Endothelial cell of umbilical vein (primary cell): ENCODE measurements at regions of chr13 and their contacts with region 1.

Region 1: GRCh38 chr13:61410669-61411297 is 4.9 kb downstream of the PCDH20 start:
- DNase-seq: peak; percentile 24
- H3K4me3 ChIP-seq: no peak overlapping the region
- H3K27ac ChIP-seq: no peak overlapping the region
- H3K4me1 ChIP-seq: no peaks in the 10 kb centered on the region
- H3K27me3 ChIP-seq: peaks cover 27 to 37% of the 10 kb centered on the region in 2 experiments
- CTCF ChIP-seq: peak; percentile 11 to 38
- POLR2A ChIP-seq: no peak

Region 2: DNA sequence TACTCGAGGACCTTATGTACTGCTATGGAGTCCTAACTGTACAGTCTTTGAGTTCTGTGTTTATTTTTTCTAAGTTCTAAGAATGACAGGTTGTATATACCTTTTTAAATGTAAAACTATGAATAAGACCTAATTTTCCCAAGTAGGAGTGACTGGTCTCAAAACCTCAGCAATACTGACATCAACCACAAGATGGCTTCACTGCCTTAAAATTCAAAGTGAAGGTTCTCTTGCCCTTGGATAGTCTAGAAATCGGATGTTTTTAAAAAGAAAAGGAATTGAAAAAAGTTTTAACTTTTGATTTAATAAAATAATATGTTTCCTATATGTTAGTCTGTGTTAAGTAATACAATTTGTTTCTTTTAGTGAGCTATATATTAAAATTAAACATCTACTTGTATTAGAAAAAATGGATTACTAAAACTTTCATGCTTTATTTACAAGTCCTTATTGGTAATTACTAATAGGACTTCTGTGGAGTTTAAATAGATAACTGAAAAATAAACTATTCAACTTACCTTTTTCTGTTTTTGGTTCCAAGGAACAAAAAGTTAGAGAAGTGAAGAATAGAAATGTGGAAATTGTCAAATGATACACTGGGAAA is 961.8 kb before region 1 on chr13:
- CTCF ChIA-PET with region 1: interaction called, 7 read pairs
- POLR2A ChIA-PET with region 1: no interaction called
- dilution Hi-C with region 1: no loop called
- intact Hi-C with region 1: loop called (anchors 10 kb)
- DNase-seq: peak; percentile 75
- H3K4me3 ChIP-seq: no peak overlapping the region
- H3K27ac ChIP-seq: no peak overlapping the region
- H3K4me1 ChIP-seq: no peaks in the 10 kb centered on the region
- H3K27me3 ChIP-seq: no peaks in the 10 kb centered on the region
- CTCF ChIP-seq: peak; percentile 48 to 56
- POLR2A ChIP-seq: no peak

Region 3: DNA sequence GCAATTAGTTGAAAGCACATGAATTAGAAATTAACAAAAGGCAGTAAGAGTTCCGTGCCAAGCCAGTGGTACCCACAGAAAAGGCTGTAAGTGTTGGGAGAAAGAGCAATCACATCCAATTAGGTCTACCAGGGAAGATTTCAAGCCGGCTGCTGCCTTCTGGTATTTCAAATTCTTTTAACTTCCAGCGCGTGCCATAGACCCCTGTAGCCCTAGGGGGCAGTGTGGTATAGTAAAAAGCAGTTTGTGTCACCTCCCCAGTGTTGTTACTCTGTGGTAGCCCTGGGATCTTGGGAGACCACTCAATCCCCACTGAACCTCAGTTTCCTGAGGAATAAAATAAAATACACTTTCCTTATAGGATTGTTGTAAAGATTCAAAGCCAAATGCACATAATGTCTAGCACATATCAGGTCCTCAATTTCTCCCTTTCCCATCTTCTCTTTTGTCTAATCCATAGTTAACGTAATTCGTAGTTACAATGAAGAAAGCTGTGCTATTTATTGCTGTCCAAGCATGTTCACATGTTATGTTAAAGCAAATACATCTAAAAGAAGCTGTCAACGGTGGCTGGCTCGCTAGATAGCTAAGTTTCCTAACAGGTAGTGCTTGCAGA is 783.6 kb before region 1 on chr13:
- CTCF ChIA-PET with region 1: interaction called, 37 read pairs
- POLR2A ChIA-PET with region 1: no interaction called
- dilution Hi-C with region 1: no loop called
- intact Hi-C with region 1: loop called (anchors 1 kb)
- DNase-seq: peak; percentile 42
- H3K4me3 ChIP-seq: no peak overlapping the region
- H3K27ac ChIP-seq: no peak overlapping the region
- H3K4me1 ChIP-seq: no peaks in the 10 kb centered on the region
- H3K27me3 ChIP-seq: peaks cover 2 to 22% of the 10 kb centered on the region in 2 experiments
- CTCF ChIP-seq: peak; percentile 63 to 72
- POLR2A ChIP-seq: no peak

Region 4: DNA sequence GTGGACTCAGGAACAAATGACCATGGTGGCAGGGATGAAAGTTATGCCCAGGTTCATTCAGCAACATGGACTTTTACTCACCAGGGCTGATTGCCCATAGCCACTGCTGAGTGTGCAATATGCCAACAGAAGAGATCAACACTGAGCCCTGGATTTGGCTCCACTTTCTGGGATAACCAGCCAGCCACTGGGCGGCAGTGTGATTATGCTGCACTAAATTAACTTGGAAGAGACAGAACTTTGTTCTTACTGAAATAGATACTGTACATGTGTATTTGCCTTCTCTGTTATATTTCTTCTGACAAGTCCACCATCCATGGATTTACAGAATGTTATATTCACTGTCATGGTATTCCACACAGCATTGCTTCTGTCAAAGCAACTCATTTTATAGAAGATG is 756.4 kb before region 1 on chr13:
- CTCF ChIA-PET with region 1: interaction called, 3 read pairs
- POLR2A ChIA-PET with region 1: no interaction called
- dilution Hi-C with region 1: no loop called
- intact Hi-C with region 1: loop called (anchors 1 kb)
- DNase-seq: peak; percentile 56
- H3K4me3 ChIP-seq: no peak overlapping the region
- H3K27ac ChIP-seq: no peak overlapping the region
- H3K4me1 ChIP-seq: no peaks in the 10 kb centered on the region
- H3K27me3 ChIP-seq: peaks cover 0 to 3% of the 10 kb centered on the region in 2 experiments
- CTCF ChIP-seq: peak; percentile 67 to 71
- POLR2A ChIP-seq: no peak

Region 5: GRCh38 chr13:61294467-61295191 is 116.2 kb before region 1 on chr13:
- CTCF ChIA-PET with region 1: no interaction called
- POLR2A ChIA-PET with region 1: no interaction called
- dilution Hi-C with region 1: no loop called
- intact Hi-C with region 1: no loop called
- DNase-seq: no peak
- H3K4me3 ChIP-seq: no peak overlapping the region
- H3K27ac ChIP-seq: no peak overlapping the region
- H3K4me1 ChIP-seq: no peaks in the 10 kb centered on the region
- H3K27me3 ChIP-seq: no peaks in the 10 kb centered on the region
- CTCF ChIP-seq: no peak
- POLR2A ChIP-seq: no peak